ENCODE measurements at regions of chr2 and their contacts with region 1.

Region 1: GRCh38 chr2:235921508-235922191 is 246.5 kb downstream of the GBX2 start:
- DNase-seq: peak in 7 of 10 donors; percentile 49 to 77 (median 68)
- H3K4me3 ChIP-seq: no peak overlapping the region
- H3K27ac ChIP-seq: peak overlapping the region in 12 of 59 donors; percentile 1 to 52 (median 27)
- H3K27me3 ChIP-seq: no peaks in the 10 kb centered on the region
- CTCF ChIP-seq: no peak

Region 2: DNA sequence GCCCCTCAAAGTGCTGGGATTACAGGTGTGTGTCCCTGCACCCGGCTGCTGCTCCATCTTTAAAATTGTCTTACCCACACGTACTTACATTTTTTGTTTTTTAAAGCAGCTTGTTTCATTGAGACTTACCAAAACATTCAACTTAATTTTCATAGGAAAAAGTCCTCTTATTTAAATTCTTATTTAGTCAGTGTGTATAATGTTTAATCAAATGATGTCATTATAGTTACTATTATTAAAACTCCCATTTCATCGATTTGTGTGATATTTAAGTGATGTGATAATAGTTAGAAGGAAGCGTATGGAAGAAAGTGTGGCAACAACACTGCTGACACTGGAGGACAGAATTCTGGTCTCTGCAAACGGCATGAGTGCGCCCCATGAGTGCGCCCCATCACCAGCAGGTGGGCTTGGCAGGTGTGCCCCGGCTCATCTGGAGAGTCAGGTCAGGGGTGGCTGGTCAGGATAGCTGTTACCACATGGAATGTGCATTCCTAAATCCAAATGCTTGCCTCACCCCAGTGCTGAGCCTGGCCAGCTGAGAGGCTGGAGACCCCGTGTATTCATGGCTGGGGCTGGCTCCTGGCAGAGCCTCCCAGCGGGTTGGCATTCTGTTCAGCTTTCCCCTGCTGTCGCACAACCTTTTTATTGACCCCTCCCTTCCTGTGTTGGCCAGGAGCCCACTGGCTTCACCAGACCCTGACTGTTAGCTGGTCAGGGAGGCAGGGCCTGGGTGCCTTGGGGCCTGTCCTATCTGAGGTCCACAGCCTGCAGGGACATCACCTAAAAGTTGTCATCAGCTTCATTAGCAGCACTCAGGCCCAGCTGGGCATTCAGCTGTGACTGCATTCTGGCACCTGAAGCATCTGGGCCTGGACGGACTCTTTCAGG is 348.1 kb before region 1 on chr2:
- intact Hi-C with region 1: no loop called
- DNase-seq: no peak
- H3K4me3 ChIP-seq: no peak overlapping the region
- H3K27ac ChIP-seq: peak overlapping the region in 46 of 59 donors; percentile 3 to 99 (median 49)
- H3K27me3 ChIP-seq: no peaks in the 10 kb centered on the region
- CTCF ChIP-seq: no peak

Region 3: GRCh38 chr2:235773188-235773928 is 148.3 kb before region 1 on chr2:
- intact Hi-C with region 1: loop called in 1 of 2 experiments (anchors 5 kb)
- DNase-seq: no peak
- H3K4me3 ChIP-seq: no peak overlapping the region
- H3K27ac ChIP-seq: peak overlapping the region in 18 of 59 donors; percentile 2 to 81 (median 50)
- H3K27me3 ChIP-seq: no peaks in the 10 kb centered on the region
- CTCF ChIP-seq: no peak